ENCODE measurements at regions of chr12 and their contacts with region 1.

Region 1: DNA sequence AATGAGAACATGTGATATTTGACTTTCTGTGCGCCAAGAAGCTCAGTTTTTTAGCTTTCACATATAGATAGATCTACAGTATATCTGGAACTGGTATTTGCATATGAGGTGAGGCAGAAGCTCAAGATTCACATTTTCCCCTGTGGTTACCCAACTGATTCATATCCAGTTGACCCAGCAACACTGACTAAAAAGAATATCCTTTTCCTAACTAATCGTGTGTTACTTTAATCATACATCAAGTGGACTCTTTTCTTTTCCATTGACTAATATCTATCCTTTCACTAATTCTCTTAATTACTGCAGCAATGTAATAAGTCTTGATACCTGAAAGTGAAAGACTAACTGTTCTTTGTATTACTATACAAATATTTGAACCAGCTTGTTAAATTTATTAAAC is 236.1 kb downstream of the AEBP2 start:
- DNase-seq: no peak
- H3K4me3 Mint-ChIP-seq: no peak overlapping the region
- H3K27ac Mint-ChIP-seq: peak overlapping the region; percentile 21
- H3K4me1 Mint-ChIP-seq: peaks cover 40% of the 10 kb centered on the region
- H3K27me3 Mint-ChIP-seq: peaks cover 2% of the 10 kb centered on the region

Region 2: GRCh38 chr12:19431407-19432308 is 243.7 kb before region 1 on chr12:
- intact Hi-C with region 1: loop called (anchors 1 kb)
- DNase-seq: peak; percentile 83
- H3K4me3 Mint-ChIP-seq: peak overlapping the region; percentile 38
- H3K27ac Mint-ChIP-seq: peak overlapping the region; percentile 99
- H3K4me1 Mint-ChIP-seq: peaks cover 39% of the 10 kb centered on the region
- H3K27me3 Mint-ChIP-seq: no peaks in the 10 kb centered on the region

Region 3: GRCh38 chr12:19482551-19483109 is 192.7 kb before region 1 on chr12:
- intact Hi-C with region 1: loop called (anchors 5 kb)
- DNase-seq: peak; percentile 72
- H3K4me3 Mint-ChIP-seq: peak overlapping the region; percentile 39
- H3K27ac Mint-ChIP-seq: peak overlapping the region; percentile 74
- H3K4me1 Mint-ChIP-seq: peaks cover 44% of the 10 kb centered on the region
- H3K27me3 Mint-ChIP-seq: no peaks in the 10 kb centered on the region

Region 4: GRCh38 chr12:19547271-19547671 is 128.1 kb before region 1 on chr12:
- intact Hi-C with region 1: loop called (anchors 1 kb)
- DNase-seq: no peak
- H3K4me3 Mint-ChIP-seq: no peak overlapping the region
- H3K27ac Mint-ChIP-seq: no peak overlapping the region
- H3K4me1 Mint-ChIP-seq: peaks cover 4% of the 10 kb centered on the region
- H3K27me3 Mint-ChIP-seq: no peaks in the 10 kb centered on the region

Region 5: DNA sequence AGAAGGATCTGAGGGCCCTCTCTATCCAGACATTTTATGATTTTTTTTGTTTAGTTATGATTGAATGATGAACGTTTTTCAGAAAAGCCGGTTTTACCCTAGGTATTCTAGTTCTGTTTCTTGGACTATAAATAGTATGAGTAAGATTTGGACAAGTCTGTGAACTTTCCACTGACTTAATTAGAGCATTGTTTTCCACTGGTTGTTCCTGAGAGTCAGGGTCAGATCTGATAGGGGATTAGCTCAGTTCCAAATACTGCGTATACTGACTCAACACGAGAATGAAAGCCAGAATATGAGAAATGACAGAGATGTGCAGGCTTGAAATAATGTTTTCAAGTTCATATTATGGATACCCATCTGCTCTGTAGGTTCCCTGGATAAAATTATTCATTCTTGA is 125.5 kb after region 1 on chr12:
- intact Hi-C with region 1: loop called (anchors 5 kb)
- DNase-seq: no peak
- H3K4me3 Mint-ChIP-seq: no peak overlapping the region
- H3K27ac Mint-ChIP-seq: peak overlapping the region; percentile 68
- H3K4me1 Mint-ChIP-seq: peaks cover 2% of the 10 kb centered on the region
- H3K27me3 Mint-ChIP-seq: no peaks in the 10 kb centered on the region

Region 6: DNA sequence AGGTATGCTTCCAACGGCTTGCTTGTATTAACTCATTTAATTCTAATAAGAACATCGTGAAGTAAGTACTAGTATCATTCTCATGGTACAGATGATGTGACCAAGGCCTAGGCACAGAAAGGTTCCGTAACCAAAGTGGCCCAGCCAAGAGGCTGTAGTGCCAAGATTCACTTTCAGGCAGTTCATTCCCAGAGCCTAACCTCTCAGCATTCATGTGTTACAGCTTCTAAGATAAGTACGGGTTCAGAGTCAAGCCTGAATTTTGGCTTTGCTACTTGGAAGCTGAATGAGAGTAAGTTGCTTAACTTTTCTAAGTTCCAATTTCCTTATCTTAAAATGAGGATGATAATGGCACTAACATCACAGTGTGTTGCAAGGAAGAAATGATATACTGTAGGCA is 143.9 kb after region 1 on chr12:
- intact Hi-C with region 1: no loop called
- DNase-seq: no peak
- H3K4me3 Mint-ChIP-seq: no peak overlapping the region
- H3K27ac Mint-ChIP-seq: no peak overlapping the region
- H3K4me1 Mint-ChIP-seq: no peaks in the 10 kb centered on the region
- H3K27me3 Mint-ChIP-seq: no peaks in the 10 kb centered on the region

Region 7: GRCh38 chr12:19833775-19834501 is 158.6 kb after region 1 on chr12:
- intact Hi-C with region 1: loop called (anchors 1 kb)
- DNase-seq: no peak
- H3K4me3 Mint-ChIP-seq: no peak overlapping the region
- H3K27ac Mint-ChIP-seq: peak overlapping the region; percentile 71
- H3K4me1 Mint-ChIP-seq: peaks cover 8% of the 10 kb centered on the region
- H3K27me3 Mint-ChIP-seq: no peaks in the 10 kb centered on the region

Region 8: DNA sequence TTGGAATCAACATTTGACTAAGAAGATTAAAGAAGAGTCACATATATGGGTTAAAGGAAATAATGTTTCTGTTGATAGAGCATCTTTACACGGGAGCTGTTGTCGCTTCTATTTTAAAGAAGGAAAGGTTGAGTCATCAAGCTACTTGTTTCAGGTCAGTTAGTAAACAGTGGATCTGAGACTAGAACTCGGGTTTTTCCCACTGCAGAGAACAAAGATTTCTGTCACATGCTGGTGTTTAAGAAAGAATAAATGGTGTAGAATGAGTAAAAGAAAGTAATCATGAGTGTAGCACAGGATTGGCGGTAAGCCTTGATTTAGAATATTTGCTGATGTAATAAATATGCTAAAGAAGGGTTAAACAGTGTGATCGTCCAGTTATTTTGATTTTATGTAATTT is 219.4 kb after region 1 on chr12:
- intact Hi-C with region 1: loop called (anchors 2 kb)
- DNase-seq: no peak
- H3K4me3 Mint-ChIP-seq: no peak overlapping the region
- H3K27ac Mint-ChIP-seq: peak overlapping the region; percentile 87
- H3K4me1 Mint-ChIP-seq: peaks cover 7% of the 10 kb centered on the region
- H3K27me3 Mint-ChIP-seq: no peaks in the 10 kb centered on the region

Measured in activated CD4-positive, alpha-beta T cell treated with anti-CD3 and anti-CD28 coated beads, Interleukin-2, amount 10 ng/mL, durations not matched to agents 24 days and 14 days (primary cell).